ENCODE measurements at regions of chr11 and their contacts with region 1.

Region 1: GRCh38 chr11:111230122-111230465 is 15.4 kb upstream of the POU2AF2 start:
- DNase-seq: no peak
- H3K4me3 ChIP-seq: no peak overlapping the region
- H3K27ac ChIP-seq: no peak overlapping the region
- H3K4me1 ChIP-seq: peaks cover 30% of the 10 kb centered on the region
- CTCF ChIP-seq: no peak

Region 2: GRCh38 chr11:110200241-110200640 is 1029.9 kb before region 1 on chr11:
- CTCF ChIA-PET with region 1: no interaction called
- POLR2A ChIA-PET with region 1: no interaction called
- intact Hi-C with region 1: loop called (anchors 10 kb)
- DNase-seq: no peak
- H3K4me3 ChIP-seq: no peak overlapping the region
- H3K27ac ChIP-seq: no peak overlapping the region
- H3K4me1 ChIP-seq: no peaks in the 10 kb centered on the region
- CTCF ChIP-seq: no peak

Region 3: GRCh38 chr11:110447897-110448745 is 782.0 kb before region 1 on chr11:
- CTCF ChIA-PET with region 1: no interaction called
- POLR2A ChIA-PET with region 1: no interaction called
- intact Hi-C with region 1: loop called (anchors 1 kb)
- DNase-seq: peak; percentile 35
- H3K4me3 ChIP-seq: no peak overlapping the region
- H3K27ac ChIP-seq: no peak overlapping the region
- H3K4me1 ChIP-seq: no peaks in the 10 kb centered on the region
- CTCF ChIP-seq: peak; percentile 93

Region 4: GRCh38 chr11:110777775-110778174 is 452.3 kb before region 1 on chr11:
- CTCF ChIA-PET with region 1: no interaction called
- POLR2A ChIA-PET with region 1: no interaction called
- intact Hi-C with region 1: loop called (anchors 10 kb)
- DNase-seq: no peak
- H3K4me3 ChIP-seq: no peak overlapping the region
- H3K27ac ChIP-seq: no peak overlapping the region
- H3K4me1 ChIP-seq: peaks cover 10% of the 10 kb centered on the region
- CTCF ChIP-seq: no peak

Region 5: DNA sequence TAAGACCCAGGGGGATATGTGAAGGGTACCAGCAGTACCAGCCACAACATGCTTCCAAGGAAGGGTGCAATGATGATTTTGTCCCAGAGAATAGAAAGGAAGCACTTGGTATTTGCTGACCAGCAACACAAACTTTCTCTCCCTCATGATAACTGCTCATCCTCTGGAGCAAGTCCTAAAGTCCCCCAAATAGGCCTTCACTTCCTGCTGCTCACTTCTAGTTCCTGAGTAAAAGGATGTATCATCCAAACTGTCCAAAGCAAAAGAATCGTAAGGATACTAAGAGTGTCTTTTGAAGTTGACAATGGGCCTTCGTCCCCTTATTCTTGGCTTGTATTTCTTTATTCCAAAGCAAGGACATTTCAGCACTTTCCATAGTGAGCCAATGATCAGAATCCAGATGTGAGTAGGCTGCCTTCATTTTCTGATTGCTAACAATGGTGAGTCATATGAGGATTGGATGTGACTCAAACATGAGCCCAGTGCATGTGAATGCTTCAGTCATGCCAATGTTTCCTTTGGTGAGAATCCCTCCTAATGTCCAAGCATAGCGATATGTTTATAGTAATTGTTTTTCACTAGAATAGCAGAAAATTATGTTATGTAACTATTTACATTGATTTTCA is 228.0 kb before region 1 on chr11:
- CTCF ChIA-PET with region 1: no interaction called
- POLR2A ChIA-PET with region 1: interaction called, 3 read pairs
- intact Hi-C with region 1: loop called (anchors 1 kb)
- DNase-seq: no peak
- H3K4me3 ChIP-seq: no peak overlapping the region
- H3K27ac ChIP-seq: no peak overlapping the region
- H3K4me1 ChIP-seq: peaks cover 35% of the 10 kb centered on the region
- CTCF ChIP-seq: no peak

Region 6: DNA sequence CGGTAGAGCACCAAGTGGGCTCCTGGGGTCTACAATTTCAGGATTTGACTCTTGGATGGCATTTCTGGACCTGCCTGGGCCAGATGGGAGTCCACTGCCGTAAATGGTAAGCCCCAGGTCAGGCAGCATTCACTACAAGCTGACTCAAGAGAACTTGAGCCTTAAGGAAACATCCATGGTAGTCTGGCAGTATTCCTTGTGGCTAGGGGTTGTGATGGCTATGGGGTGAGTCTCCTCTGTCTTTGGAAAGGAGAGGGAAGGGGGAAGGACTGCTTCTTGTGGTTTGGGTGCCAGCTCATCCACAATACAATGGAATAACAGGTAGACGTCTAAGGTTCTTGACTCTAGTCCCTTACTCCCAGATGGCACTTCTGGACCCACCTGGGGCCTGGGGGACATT is 16.8 kb before region 1 on chr11:
- CTCF ChIA-PET with region 1: no interaction called
- POLR2A ChIA-PET with region 1: interaction called, 12 read pairs
- intact Hi-C with region 1: no loop called
- DNase-seq: no peak
- H3K4me3 ChIP-seq: no peak overlapping the region
- H3K27ac ChIP-seq: no peak overlapping the region
- H3K4me1 ChIP-seq: no peaks in the 10 kb centered on the region
- CTCF ChIP-seq: no peak

Region 7: GRCh38 chr11:111446404-111447111 is 216.5 kb after region 1 on chr11:
- CTCF ChIA-PET with region 1: interaction called, 4 read pairs
- POLR2A ChIA-PET with region 1: no interaction called
- intact Hi-C with region 1: loop called (anchors 1 kb)
- DNase-seq: peak; percentile 96
- H3K4me3 ChIP-seq: no peak overlapping the region
- H3K27ac ChIP-seq: no peak overlapping the region
- H3K4me1 ChIP-seq: peaks cover 53% of the 10 kb centered on the region
- CTCF ChIP-seq: peak; percentile 95